OCI-LY7 (cell line): ENCODE measurements at regions of chr14 and their contacts with region 1.

Region 1: GRCh38 chr14:31084385-31084784 is 58.2 kb upstream of the STRN3 start:
- DNase-seq: peak; percentile 85
- H3K4me3 ChIP-seq: peak overlapping the region; percentile 9
- H3K27ac ChIP-seq: peak overlapping the region; percentile 28
- H3K4me1 ChIP-seq: peaks cover 17% of the 10 kb centered on the region
- CTCF ChIP-seq: peak; percentile 35

Region 2: GRCh38 chr14:30656190-30656632 is 428.2 kb before region 1 on chr14:
- CTCF ChIA-PET with region 1: no interaction called
- POLR2A ChIA-PET with region 1: no interaction called
- intact Hi-C with region 1: loop called (anchors 10 kb)
- DNase-seq: peak; percentile 60
- H3K4me3 ChIP-seq: no peak overlapping the region
- H3K27ac ChIP-seq: no peak overlapping the region
- H3K4me1 ChIP-seq: no peaks in the 10 kb centered on the region
- CTCF ChIP-seq: peak; percentile 84

Region 3: GRCh38 chr14:30874120-30874998 is 210.0 kb before region 1 on chr14 and contains the start of gene COCH:
- CTCF ChIA-PET with region 1: no interaction called
- POLR2A ChIA-PET with region 1: no interaction called
- intact Hi-C with region 1: loop called (anchors 5 kb)
- DNase-seq: peak; percentile 82
- H3K4me3 ChIP-seq: peak within 1 kb of the TSS; percentile 73
- H3K27ac ChIP-seq: no peak within 1 kb of the TSS
- H3K4me1 ChIP-seq: peaks cover 11% of the 10 kb centered on the region
- CTCF ChIP-seq: peak; percentile 70
- total RNA-seq, gene COCH: 11.8 and 18.7 TPM in 2 replicates

Region 4: GRCh38 chr14:30982533-30982932 is 101.9 kb before region 1 on chr14:
- CTCF ChIA-PET with region 1: no interaction called
- POLR2A ChIA-PET with region 1: interaction called, 3 read pairs
- intact Hi-C with region 1: loop called (anchors 1 kb)
- DNase-seq: peak; percentile 56
- H3K4me3 ChIP-seq: peak overlapping the region; percentile 41
- H3K27ac ChIP-seq: peak overlapping the region; percentile 64
- H3K4me1 ChIP-seq: peaks cover 45% of the 10 kb centered on the region
- CTCF ChIP-seq: no peak

Region 5: DNA sequence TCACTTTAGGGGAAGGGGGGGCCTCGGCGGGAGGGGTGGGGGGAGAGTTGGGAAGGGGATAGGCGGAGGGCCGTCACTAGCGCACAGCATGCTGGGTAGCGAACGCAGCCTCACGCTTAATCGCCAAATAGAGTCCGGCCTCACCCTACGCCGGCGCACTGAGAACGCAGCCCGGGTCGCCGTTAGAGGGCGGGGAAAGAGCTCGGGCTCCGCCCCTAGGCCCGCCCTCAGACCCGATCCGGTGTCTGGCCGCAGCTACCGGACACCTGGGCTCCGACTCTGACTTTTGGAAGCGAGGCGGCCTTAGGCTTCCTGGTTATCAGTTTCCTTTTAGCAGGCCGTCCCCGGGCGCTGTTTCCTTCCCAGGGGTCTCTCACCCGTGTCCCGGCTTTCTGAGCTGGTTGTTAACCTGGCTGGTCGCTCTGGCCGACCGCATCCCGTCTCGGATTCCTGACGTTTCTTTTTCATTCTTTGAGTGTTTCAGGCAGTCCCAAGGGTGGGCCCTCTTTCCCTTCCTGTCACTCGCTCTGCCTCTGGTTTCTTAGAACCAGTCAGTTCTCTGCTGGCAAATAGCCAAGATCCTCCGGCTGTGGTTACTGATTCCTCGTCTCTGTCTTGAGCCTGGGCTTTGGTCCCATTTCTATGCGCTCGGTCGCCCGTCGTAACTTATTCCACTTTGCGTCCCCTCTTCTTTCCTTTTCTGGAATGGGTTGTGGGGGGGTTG is 57.8 kb before region 1 on chr14:
- CTCF ChIA-PET with region 1: no interaction called
- POLR2A ChIA-PET with region 1: no interaction called
- intact Hi-C with region 1: loop called (anchors 5 kb)
- DNase-seq: peak; percentile 95
- H3K4me3 ChIP-seq: peak overlapping the region; percentile 98
- H3K27ac ChIP-seq: peak overlapping the region; percentile 76
- H3K4me1 ChIP-seq: peaks cover 25% of the 10 kb centered on the region
- CTCF ChIP-seq: no peak

Region 6: GRCh38 chr14:31357279-31357678 is 272.9 kb after region 1 on chr14:
- CTCF ChIA-PET with region 1: no interaction called
- POLR2A ChIA-PET with region 1: interaction called, 3 read pairs
- intact Hi-C with region 1: loop called (anchors 5 kb)
- DNase-seq: no peak
- H3K4me3 ChIP-seq: no peak overlapping the region
- H3K27ac ChIP-seq: no peak overlapping the region
- H3K4me1 ChIP-seq: peaks cover 22% of the 10 kb centered on the region
- CTCF ChIP-seq: no peak